Posterior vena cava (tissue), 2 donors: ENCODE measurements at regions of chr7 and their contacts with region 1.

Region 1: DNA sequence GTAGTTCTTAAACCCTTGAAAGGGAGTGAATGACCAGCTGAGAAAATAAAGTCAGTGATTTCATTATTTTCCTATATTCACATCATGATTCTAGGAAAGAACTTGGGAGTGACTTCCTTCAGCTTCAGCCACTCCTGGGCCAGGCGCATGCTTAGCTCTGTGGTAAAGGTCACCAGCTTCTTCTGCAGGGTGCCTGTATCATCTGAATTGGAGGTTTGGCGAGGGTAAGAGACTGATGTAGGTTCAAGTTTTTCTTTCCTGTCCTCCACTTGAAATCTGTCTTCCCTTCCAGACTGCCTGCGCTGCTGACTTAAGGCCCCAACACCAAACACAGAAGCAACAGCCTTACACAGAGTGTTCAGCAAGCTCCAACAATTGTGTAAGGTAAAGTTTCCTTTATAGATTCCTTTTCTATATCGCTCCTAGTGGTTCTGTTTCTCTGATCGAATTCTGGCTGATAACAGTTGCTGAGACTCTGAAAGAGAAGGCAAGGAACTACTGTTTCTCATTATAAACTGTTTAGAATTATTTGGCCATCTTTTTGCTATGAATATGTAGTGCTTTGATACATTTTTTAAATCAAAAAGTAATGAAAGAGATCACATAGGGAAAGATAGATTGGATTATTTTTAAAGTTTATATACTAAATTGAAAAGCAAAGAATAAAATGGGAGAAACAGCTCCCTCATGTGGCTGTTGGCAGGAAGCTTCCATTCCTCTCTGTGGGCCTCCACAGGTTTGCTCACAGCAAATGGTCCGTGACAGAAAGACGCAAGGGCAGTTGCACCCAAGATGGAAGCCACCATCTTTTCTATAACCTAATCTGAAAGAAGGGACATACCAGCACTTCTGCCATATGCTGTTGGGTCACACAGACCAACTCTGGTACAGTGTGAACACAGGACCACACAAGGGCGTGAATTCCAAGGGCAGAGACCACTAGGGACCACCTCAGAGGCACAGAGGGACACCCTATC is 14.0 kb downstream of the GATAD1 start:
- DNase-seq: no peak

Region 2: DNA sequence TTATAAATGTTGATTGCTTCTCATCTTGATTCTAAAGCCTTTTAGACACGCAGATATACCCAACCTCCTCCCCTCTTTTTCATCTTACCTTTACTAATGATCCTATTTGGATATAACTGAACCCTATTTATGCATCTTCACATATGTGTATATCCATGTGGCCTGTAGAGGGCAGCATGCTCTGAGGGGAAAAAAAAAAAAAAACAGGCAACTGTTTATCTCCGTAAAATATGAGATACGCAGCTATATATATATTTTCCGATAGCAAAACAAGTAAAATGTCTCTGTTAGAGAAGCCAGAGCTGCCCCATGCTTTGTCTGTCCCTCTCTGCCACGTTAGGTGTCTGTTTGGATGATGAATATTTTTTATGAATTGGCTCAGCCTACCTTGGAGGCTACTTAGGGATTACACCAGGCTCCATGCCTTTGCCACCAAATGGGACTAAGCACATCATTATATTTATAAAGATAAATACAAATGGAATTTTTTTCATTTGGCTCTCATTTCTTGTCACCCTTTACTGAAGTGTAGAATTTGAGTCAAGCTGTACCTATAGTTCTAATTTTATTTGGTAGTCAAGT is 1371.8 kb before region 1 on chr7:
- intact Hi-C with region 1: loop called in 1 of 2 experiments (anchors 10 kb)
- DNase-seq: no peak

Region 3: DNA sequence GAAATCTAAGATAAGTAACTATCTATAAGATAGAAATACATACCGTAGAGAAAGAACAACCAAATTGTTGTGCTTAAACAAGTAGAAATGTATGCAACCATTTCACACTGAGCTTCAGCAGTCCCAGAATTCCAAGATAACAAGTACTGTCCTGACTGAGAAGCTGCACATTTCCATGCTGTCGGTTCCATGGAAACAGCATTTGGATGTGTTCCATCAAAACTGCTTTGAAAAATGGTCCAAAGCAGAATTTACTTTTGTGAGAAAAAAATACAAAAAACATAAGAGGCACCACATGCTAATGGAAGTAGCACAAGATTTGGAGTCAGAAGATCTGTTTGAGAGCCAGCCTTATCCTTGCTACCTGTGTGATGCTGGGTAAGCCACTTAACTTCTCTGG is 673.4 kb before region 1 on chr7:
- intact Hi-C with region 1: no loop called
- DNase-seq: no peak